GM12878 (cell line): ENCODE measurements at regions of chr3 and their contacts with region 1.

Region 1: DNA sequence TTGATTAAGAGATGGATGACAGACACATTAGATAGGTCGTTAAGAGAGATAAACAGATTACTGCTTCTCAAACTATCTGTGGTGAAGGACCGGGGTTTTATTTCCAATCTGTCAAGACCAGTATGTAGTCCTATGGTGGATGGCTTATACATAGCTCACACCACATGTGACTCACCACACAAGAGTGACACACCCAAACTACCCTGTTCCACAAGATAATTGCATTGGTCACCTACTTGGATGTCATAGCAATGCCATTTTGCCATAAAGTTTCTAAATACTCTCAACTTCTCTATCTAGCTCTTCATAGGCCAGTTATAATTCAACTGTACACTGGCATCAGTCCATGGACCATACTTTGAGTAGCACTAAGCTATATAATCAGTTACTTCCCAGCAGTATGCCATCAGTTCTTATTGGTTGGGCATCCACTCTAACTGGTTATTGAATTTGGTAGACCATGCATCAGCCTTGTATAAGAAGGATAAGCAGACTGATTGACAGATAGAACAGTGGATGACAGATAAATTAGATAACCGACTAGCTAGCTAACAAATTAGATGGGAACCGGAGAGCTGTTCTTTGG is 11.6 kb downstream of the WWTR1 start:
- DNase-seq: no peak
- ATAC-seq: peak; percentile 51
- H3K4me3 ChIP-seq: no peak overlapping the region
- H3K27ac ChIP-seq: no peak overlapping the region
- H3K4me1 ChIP-seq: peaks cover 14% of the 10 kb centered on the region
- H3K27me3 ChIP-seq: no peaks in the 10 kb centered on the region
- CTCF ChIP-seq: no peak
- EP300 ChIP-seq: no peak
- POLR2A ChIP-seq: no peak
- RAD21 ChIP-seq: no peak

Region 2: DNA sequence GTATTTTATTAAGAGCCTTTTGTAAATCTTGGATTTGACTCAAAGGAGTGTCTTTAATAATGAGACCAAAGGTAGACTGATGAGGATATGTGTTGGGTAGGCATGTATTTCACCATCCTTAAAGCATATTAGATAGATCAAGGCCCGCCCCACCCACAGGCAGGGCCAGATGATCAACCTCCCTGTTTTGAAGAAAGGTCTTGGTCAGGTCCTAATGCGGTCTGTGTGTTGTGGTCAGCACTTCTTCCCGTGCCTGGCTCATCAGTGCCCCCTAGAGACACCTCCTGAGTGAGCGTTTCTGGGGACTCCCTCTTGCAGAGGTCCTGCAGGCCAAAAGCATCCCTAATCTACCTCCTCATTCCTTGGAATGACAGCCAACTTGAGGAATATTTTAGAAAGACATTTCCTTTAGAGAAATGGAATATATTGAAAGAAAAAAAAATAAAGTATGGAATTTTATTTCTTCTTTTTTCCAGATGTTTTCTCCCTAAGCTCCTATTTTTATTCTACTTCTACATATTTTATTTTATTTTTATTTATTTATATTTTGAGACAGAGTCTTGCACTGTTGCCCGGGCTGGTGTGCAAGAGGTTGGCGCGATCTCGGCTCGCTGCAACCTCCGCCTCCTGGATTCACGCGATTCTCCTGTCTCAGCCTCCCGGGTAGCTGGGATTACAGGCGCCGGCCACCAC is 165.8 kb before region 1 on chr3:
- CTCF ChIA-PET with region 1: no interaction called
- POLR2A ChIA-PET with region 1: no interaction called
- RAD21 ChIA-PET with region 1: no interaction called
- SMC1A ChIA-PET with region 1: no interaction called
- in situ Hi-C with region 1: no loop called
- intact Hi-C with region 1: no loop called
- DNase-seq: peak; percentile 52
- ATAC-seq: peak; percentile 99
- H3K4me3 ChIP-seq: no peak overlapping the region
- H3K27ac ChIP-seq: no peak overlapping the region
- H3K4me1 ChIP-seq: no peaks in the 10 kb centered on the region
- H3K27me3 ChIP-seq: no peaks in the 10 kb centered on the region
- CTCF ChIP-seq: peak; percentile 86 to 95 (median 93)
- EP300 ChIP-seq: no peak
- POLR2A ChIP-seq: no peak
- RAD21 ChIP-seq: peak; percentile 97

Region 3: DNA sequence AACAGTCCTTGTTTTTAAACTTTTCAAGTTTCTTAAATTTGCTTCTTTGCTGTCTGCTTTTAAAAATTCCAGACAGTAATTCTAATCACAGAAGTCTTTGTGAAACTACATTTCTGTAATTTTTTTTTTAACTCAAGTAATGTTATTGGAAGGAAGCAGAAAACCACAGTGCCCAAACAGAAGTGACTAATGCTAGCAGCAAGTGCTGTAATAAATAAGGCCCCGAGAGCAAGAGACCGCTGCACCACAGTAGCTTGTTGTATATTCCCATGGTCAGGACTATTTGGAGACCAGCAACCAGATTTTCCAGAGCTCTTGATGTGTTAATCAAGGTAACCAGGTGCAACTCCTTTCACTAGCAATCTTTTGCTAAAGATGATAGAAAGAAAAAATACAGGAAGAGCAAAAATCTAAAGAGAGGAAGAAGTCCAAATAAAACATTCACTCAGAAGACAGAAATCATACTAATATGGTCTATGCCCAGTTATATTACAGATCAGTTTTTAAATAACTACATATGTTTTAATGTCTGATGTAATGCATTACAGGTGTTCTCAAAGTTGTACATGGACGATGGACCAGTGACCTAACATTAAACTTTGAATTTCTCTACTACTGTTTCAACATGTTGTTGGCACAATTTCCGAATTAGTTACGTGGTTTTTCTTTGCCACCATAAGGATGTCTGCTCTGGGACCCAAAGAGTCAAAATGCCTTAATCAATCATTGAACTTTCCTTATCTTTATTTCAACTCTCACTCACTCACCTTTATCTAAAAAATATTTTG is 24.9 kb before region 1 on chr3:
- CTCF ChIA-PET with region 1: interaction called, 5 read pairs
- POLR2A ChIA-PET with region 1: no interaction called
- RAD21 ChIA-PET with region 1: interaction called, 4 read pairs
- SMC1A ChIA-PET with region 1: interaction called, 10 read pairs
- in situ Hi-C with region 1: no loop called
- intact Hi-C with region 1: no loop called
- DNase-seq: no peak
- ATAC-seq: peak; percentile 89
- H3K4me3 ChIP-seq: no peak overlapping the region
- H3K27ac ChIP-seq: no peak overlapping the region
- H3K4me1 ChIP-seq: peaks cover 14% of the 10 kb centered on the region
- H3K27me3 ChIP-seq: no peaks in the 10 kb centered on the region
- CTCF ChIP-seq: no peak
- EP300 ChIP-seq: no peak
- POLR2A ChIP-seq: no peak
- RAD21 ChIP-seq: no peak